BJ (cell line): ENCODE measurements at regions of chr9 and their contacts with region 1.

Region 1: GRCh38 chr9:104927912-104928740 is at the start of gene ABCA1:
- DNase-seq: no peak
- H3K4me3 ChIP-seq: peak within 1 kb of the TSS; percentile 73
- H3K27me3 ChIP-seq: no peaks in the 10 kb centered on the region
- CTCF ChIP-seq: no peak
- polyA plus RNA-seq, gene ABCA1: 27.4 and 36.2 TPM in 2 replicates

Region 2: DNA sequence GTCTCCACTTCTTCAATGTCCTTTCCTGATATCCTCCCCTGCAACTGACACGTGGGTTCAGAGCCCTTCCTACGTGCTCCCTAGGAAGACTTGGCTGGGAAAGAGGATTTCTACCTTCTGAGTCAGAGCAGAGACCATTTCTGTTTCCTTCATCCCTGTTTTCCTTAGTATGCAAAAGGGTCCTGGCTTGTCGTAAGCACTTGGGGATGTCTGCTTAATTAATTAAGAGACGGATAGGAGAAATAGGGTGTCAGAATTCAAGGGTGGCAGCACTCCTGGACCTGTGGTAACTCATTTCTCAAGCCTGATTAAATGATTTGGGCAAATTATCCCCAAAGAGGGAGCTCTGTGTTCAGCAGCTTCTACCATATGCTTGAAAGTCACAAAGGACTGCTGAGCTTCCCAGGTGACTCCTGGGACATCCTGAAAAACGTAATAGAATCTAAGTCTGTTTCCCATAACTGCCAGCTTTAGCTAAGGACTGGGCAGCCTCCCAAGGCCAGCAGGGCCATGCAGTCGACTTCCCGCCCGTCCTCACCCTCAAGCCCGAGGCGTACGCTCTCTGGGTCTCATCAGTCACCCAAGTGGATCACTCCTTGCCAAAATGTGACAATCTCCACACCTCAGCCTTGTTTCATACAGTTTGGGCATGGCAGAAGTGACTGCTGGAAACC is 20.7 kb before region 1 on chr9:
- CTCF ChIA-PET with region 1: interaction called, 13 read pairs
- POLR2A ChIA-PET with region 1: no interaction called
- DNase-seq: no peak
- H3K4me3 ChIP-seq: no peak overlapping the region
- H3K27me3 ChIP-seq: no peaks in the 10 kb centered on the region
- CTCF ChIP-seq: no peak

Region 3: DNA sequence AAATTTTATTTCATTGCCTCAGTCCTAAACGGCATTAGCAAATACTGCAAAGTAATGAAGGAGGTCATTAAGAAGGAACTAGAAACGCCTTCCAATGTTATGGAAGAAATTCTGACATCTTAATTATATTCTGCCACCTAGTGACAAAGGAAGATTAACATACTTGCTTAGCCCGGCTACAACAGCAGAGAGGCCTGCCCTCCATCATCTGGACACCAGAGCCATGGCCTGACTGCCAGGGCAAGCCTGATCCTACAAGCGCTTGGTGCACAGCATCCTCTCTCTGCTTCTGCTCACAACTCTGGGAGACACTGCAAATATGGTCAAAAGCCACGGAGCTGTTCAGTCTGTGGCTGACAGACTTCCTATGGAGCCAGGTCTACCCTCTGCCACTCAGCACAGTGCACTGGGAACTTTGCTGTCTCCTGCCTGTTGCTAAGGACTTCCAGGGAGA is 229.0 kb after region 1 on chr9:
- CTCF ChIA-PET with region 1: interaction called, 13 read pairs
- POLR2A ChIA-PET with region 1: no interaction called
- DNase-seq: peak; percentile 44
- H3K4me3 ChIP-seq: no peak overlapping the region
- H3K27me3 ChIP-seq: no peaks in the 10 kb centered on the region
- CTCF ChIP-seq: peak; percentile 48